Posterior cingulate gyrus (tissue), 11 donors: ENCODE measurements at regions of chr16 and their contacts with region 1.

Region 1: GRCh38 chr16:69796351-69797118 is 34.4 kb downstream of the WWP2 start:
- DNase-seq: peak in 1 of 10 donors; percentile 48

Region 2: DNA sequence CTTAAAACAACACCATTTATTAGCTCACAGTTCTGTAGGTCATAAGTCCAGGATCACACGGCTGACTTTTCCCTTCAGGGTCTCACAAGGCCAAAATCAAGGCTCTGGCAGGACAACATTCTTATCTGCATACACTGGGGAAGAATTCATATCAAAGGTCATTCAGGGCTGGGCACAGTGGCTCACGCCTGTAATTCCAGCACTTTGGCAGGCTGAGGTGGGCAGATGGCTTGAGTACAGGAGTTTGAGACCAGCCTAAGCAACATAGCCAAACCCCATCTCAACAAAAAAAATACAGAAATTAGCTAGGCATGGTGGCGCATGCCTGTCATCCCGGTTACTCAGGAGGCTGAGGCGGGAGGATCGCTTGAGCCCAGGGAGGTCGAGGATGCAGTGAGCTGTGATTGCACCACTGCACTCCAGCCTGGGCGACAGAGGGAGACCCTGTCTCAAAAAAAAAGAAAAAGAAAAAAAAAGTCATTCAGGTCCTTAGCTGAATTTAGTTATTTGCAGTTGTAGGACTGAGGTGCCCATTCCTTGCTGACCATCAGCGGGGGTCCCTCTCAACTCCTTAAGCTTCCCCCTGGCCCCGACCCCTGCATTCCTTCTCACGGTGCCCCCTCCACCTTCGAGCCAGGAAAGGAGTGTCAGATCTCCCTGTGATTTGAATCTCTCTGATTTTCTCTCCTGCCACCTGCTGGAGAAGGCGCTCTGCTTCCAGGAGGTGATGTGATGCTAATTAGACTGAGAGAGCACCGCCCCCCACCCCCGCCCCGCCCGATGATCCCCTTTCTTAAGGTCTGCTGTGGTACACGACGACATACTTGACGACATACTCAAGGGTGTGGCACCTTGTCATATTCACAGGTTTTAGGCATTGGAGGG is 62.8 kb after region 1 on chr16:
- intact Hi-C with region 1: loop called (anchors 5 kb)
- DNase-seq: peak in 5 of 10 donors; percentile 28 to 54 (median 51)

Region 3: DNA sequence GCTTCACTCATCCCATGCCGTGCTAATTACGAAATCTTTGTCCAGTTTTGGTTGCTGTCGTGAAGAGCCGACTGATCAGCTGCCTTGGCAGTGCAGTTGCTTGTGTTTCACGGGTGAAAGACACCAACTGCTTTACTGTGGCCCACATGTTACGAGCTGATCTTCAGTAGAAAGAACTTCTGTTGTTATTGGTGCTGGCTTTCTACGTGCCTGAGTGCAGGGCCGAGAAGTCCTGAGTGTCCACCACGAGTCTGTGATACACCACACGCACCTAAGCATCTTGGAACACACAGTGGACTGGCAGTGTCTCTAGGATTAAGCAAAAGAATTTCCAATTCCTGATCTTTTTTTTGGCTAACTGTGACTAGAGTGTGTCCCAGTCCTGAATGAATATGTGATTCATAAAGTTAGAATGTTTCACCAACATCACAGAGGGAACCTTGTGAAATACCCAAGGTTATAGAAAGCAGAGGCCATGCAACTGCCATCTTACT is 84.2 kb after region 1 on chr16:
- intact Hi-C with region 1: no loop called
- DNase-seq: peak in 2 of 10 donors; percentile 15 to 27

Region 4: GRCh38 chr16:69937465-69937951 is 141.0 kb after region 1 on chr16:
- intact Hi-C with region 1: loop called (anchors 1 kb)
- DNase-seq: peak; percentile 45 to 95 (median 70)